Esophagus muscularis mucosa (tissue), 4 donors: ENCODE measurements at regions of chr3 and their contacts with region 1.

Region 1: DNA sequence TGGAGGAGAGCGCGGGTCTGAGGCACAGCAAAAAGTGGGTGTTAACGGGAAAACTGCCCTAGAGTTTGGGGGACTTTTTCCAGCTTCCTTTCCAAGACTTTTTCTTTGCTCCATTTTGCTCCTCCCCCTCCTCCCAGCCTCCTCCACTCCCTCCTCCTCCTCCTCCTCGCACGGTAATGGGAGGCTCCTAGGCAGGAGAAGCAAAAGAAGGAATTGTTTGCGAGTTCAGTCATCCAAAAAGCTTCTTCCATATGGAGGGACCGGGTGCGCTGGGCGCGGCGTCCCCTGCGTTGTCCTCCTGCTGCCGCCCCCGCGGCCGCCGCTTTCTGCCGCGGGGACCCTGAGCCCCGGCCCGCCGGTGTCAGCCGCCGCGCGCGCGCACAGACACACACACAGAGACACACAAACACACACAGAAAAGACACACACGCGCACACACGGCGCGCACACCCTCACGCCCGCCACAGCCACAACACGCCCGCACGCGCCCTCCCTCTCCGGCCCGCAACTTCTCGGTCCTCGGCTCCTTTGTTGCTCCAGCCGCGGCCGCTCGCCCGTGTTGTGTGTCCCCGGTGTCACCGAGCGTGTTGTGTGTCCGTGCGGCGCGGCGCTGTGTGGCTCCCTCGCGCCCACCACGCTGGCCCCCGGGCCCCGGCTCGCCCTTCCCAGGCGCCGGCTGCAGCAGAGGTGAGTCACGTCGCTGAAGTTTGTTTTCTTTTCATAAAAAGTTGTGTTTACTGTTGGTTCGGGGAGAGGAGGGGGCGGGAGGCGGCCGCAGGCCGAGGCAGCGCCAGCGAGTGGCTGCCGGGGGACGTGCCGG is at the start of gene BOC:
- DNase-seq: peak; percentile 92
- H3K4me3 ChIP-seq: peak within 1 kb of the TSS; percentile 70 to 97 (median 89)
- H3K27ac ChIP-seq: peak within 1 kb of the TSS; percentile 96 to 97 (median 96)
- H3K4me1 ChIP-seq: peaks cover 6 to 51% (median 44%) of the 10 kb centered on the region in 4 donors
- H3K27me3 ChIP-seq: no peaks in the 10 kb centered on the region
- CTCF ChIP-seq: peak in 1 of 3 experiments; percentile 15
- EP300 ChIP-seq: no peak
- POLR2A ChIP-seq: no peak
- total RNA-seq, gene BOC: 87.2 to 119 (median 90.8) TPM

Region 2: GRCh38 chr3:112860898-112861297 is 350.6 kb before region 1 on chr3:
- intact Hi-C with region 1: no loop called
- DNase-seq: no peak
- H3K4me3 ChIP-seq: no peak overlapping the region
- H3K27ac ChIP-seq: no peak overlapping the region
- H3K4me1 ChIP-seq: no peaks in the 10 kb centered on the region
- H3K27me3 ChIP-seq: no peaks in the 10 kb centered on the region
- CTCF ChIP-seq: no peak
- EP300 ChIP-seq: no peak
- POLR2A ChIP-seq: no peak

Region 3: DNA sequence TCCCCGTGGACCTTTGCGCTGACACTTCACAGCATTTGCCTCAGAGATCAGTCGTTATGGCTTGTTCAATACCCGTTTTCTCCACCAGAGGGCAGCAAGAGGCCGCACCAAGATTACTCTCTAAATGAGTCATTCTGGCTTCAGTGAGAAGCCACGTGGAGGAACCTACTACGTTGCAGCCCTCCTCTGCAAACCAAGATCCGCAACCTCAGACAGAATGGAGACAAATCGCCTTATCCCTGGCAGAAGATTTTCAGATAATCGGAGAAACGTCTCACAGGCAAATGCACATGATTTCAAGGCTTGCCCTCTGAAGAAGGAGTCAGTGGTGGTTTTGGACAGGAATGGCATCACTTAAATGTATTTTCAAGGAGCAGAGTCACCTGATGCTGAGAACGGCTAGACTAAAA is 160.2 kb before region 1 on chr3:
- intact Hi-C with region 1: loop called (anchors 5 kb)
- DNase-seq: peak; percentile 98
- H3K4me3 ChIP-seq: peak overlapping the region; percentile 26 to 32 (median 29)
- H3K27ac ChIP-seq: peak overlapping the region; percentile 69 to 78 (median 76)
- H3K4me1 ChIP-seq: peaks cover 12 to 29% (median 18%) of the 10 kb centered on the region in 4 donors
- H3K27me3 ChIP-seq: no peaks in the 10 kb centered on the region
- CTCF ChIP-seq: peak; percentile 96 to 98 (median 98)
- EP300 ChIP-seq: no peak
- POLR2A ChIP-seq: no peak

Region 4: DNA sequence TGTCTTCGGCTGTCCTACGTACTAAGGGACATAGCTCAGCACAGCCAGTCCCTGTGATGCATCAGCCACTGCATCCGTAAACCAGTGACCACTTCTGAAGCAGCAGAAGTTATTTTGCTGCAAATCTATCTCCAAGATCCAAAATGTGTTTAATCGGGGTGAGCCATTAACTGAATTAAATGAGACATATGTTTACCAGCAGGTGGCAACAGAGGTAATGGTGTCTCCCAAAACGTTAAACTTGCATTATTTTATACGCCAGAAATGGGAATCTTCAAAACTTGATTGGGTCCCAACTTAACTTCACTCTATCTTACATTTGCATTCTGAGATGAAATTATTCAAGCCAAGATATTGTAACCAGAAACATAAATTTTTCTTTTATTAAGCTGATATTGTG is 75.5 kb before region 1 on chr3:
- intact Hi-C with region 1: loop called (anchors 5 kb)
- DNase-seq: no peak
- H3K4me3 ChIP-seq: no peak overlapping the region
- H3K27ac ChIP-seq: peak overlapping the region; percentile 29 to 60 (median 40)
- H3K4me1 ChIP-seq: peaks cover 0 to 45% (median 32%) of the 10 kb centered on the region in 4 donors
- H3K27me3 ChIP-seq: no peaks in the 10 kb centered on the region
- CTCF ChIP-seq: peak; percentile 62 to 66 (median 64)
- EP300 ChIP-seq: no peak
- POLR2A ChIP-seq: no peak

Region 5: DNA sequence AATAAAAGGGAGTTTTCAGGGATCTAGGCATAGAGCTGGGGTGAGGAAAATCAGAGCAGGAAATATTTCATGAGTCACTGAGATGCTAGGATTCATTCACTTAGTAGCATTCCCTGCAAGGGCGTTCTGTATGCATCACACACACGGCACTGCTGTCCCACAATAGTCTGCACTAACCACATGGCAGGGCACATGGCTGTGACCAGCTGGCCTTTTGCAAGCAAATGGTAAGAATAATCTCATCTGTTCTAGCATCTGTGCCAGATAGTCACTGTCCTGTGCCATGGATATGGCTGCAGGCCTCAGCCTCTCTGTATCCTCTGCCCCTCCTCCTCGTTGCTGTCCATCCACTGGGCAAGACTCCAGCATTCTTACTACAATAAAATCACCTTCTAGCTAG is 37.6 kb after region 1 on chr3:
- intact Hi-C with region 1: loop called (anchors 5 kb)
- DNase-seq: no peak
- H3K4me3 ChIP-seq: no peak overlapping the region
- H3K27ac ChIP-seq: peak overlapping the region; percentile 77 to 87 (median 84)
- H3K4me1 ChIP-seq: peaks cover 11 to 81% (median 72%) of the 10 kb centered on the region in 4 donors
- H3K27me3 ChIP-seq: no peaks in the 10 kb centered on the region
- CTCF ChIP-seq: no peak
- EP300 ChIP-seq: no peak
- POLR2A ChIP-seq: no peak

Region 6: GRCh38 chr3:113287803-113288648 is 76.5 kb after region 1 on chr3:
- intact Hi-C with region 1: loop called (anchors 5 kb)
- DNase-seq: no peak
- H3K4me3 ChIP-seq: no peak overlapping the region
- H3K27ac ChIP-seq: peak overlapping the region; percentile 65 to 79 (median 70)
- H3K4me1 ChIP-seq: peaks cover 3 to 52% (median 44%) of the 10 kb centered on the region in 4 donors
- H3K27me3 ChIP-seq: no peaks in the 10 kb centered on the region
- CTCF ChIP-seq: peak; percentile 99 to 100 (median 100)
- EP300 ChIP-seq: no peak
- POLR2A ChIP-seq: no peak

Region 7: GRCh38 chr3:113696658-113697499 is 485.3 kb after region 1 on chr3:
- intact Hi-C with region 1: no loop called
- DNase-seq: peak; percentile 100
- H3K4me3 ChIP-seq: peak overlapping the region; percentile 90 to 98 (median 96)
- H3K27ac ChIP-seq: peak overlapping the region; percentile 99 to 100 (median 99)
- H3K4me1 ChIP-seq: peaks cover 40 to 54% (median 47%) of the 10 kb centered on the region in 4 donors
- H3K27me3 ChIP-seq: no peaks in the 10 kb centered on the region
- CTCF ChIP-seq: peak in 2 of 3 experiments; percentile 34 to 37
- EP300 ChIP-seq: no peak
- POLR2A ChIP-seq: no peak

Region 8: GRCh38 chr3:113769551-113769950 is 558.0 kb after region 1 on chr3:
- intact Hi-C with region 1: no loop called
- DNase-seq: no peak
- H3K4me3 ChIP-seq: no peak overlapping the region
- H3K27ac ChIP-seq: no peak overlapping the region
- H3K4me1 ChIP-seq: peaks cover 0 to 5% (median 0%) of the 10 kb centered on the region in 4 donors
- H3K27me3 ChIP-seq: no peaks in the 10 kb centered on the region
- CTCF ChIP-seq: no peak
- EP300 ChIP-seq: no peak
- POLR2A ChIP-seq: no peak